ENCODE measurements at regions of chr12 and their contacts with region 1.

Region 1: DNA sequence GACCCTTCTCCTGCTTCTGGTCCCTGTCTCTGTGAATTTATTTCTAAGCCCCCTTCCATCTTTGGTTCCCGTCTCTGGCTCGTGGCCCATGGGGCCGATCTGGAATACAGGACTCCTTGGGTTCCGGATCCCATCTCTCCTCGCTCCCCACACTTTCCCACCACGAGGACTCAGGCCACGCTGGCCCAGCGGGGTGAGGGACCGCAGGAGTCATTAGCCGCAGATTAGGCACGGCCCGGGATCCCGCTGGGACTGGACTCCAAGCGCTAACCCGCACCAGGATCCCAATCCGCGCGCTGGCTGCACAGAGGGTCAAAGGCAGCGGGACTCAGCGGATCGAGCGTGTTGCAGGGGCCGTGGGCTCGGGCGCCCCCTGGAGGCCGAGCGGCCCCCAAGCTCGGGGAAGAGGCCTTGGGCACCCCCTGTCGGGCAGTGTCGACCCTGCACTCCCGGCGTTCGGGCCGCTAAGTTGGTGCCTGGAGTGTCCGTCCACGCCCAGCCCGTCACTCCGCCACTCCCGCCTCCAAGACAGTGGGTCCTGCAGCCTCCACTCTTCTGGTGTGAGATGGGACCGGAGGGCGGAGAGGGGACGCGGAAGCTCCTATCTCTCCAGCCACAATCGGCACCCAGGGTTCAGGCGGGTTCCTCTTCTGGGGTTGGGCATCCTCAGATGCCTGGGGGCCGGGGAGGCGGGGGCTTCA is 9.5 kb downstream of the SHMT2 start:
- DNase-seq: peak; percentile 91

Region 2: GRCh38 chr12:56979628-56980027 is 259.4 kb before region 1 on chr12:
- CTCF ChIA-PET with region 1: no interaction called
- POLR2A ChIA-PET with region 1: no interaction called
- DNase-seq: no peak

Region 3: GRCh38 chr12:57213058-57213715 is 25.8 kb before region 1 on chr12:
- CTCF ChIA-PET with region 1: interaction called, 121 read pairs
- POLR2A ChIA-PET with region 1: interaction called, 87 read pairs
- DNase-seq: peak; percentile 88

Region 4: DNA sequence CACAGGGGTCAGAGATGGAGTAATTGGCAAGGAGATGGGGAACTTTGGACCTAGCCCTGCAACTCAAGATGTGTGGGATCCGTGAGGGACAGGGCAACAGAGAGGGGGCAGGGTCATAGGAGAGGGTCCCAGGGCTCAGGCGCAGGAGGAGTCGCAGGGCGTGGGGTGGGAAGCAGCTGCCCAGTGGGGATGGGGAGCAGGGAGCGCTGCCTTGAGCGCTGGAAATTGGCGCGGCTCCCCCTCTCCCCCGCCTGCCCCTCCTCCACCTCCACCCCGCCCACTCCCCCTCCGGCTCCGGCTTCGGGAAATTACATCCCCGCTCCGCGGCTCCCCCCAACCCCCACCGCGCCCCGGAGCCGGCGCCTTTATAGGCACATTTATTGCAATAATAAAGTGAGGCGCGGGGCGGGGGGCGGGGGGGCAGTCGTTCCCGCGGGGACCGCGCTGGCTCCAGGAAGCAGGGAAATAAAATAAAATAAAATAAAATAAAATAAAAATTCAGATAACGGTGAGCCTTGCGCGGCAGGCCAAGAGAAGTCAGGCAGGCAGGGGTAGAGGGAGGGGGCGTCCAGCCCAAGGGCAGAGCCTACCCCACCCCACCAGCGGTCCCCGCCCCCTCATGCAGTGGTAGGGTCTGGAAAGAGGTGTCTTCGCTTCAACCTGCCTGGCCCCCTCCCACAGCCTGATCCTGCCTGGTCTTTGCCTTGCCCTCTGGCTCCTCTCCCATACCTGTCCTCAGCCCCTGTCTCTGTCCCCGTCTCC is 18.8 kb before region 1 on chr12:
- CTCF ChIA-PET with region 1: interaction called, 121 read pairs
- POLR2A ChIA-PET with region 1: interaction called, 87 read pairs
- DNase-seq: no peak

Region 5: GRCh38 chr12:57261428-57261865 is 22.4 kb after region 1 on chr12:
- CTCF ChIA-PET with region 1: interaction called, 11 read pairs
- POLR2A ChIA-PET with region 1: interaction called, 3 read pairs
- DNase-seq: no peak

Region 6: GRCh38 chr12:57401165-57401564 is 162.2 kb after region 1 on chr12:
- CTCF ChIA-PET with region 1: no interaction called
- POLR2A ChIA-PET with region 1: no interaction called
- DNase-seq: no peak

Measured in HEK293T (cell line).